PC-9 (cell line): ENCODE measurements at regions of chr2 and their contacts with region 1.

Region 1: GRCh38 chr2:67346718-67347407 is 50.3 kb upstream of the ETAA1 start:
- DNase-seq: peak in 1 of 2 experiments; percentile 45
- H3K4me3 ChIP-seq: no peak overlapping the region
- H3K27ac ChIP-seq: no peak overlapping the region
- H3K4me1 ChIP-seq: no peaks in the 10 kb centered on the region; the same call in 1 of the 2 replicates
- H3K27me3 ChIP-seq: no peaks in the 10 kb centered on the region
- CTCF ChIP-seq: no peak

Region 2: GRCh38 chr2:66982766-66983165 is 364.1 kb before region 1 on chr2:
- CTCF ChIA-PET with region 1: interaction called, 12 read pairs
- POLR2A ChIA-PET with region 1: no interaction called
- intact Hi-C with region 1: no loop called
- DNase-seq: no peak
- H3K4me3 ChIP-seq: no peak overlapping the region
- H3K27ac ChIP-seq: no peak overlapping the region
- H3K4me1 ChIP-seq: no peaks in the 10 kb centered on the region
- H3K27me3 ChIP-seq: no peaks in the 10 kb centered on the region
- CTCF ChIP-seq: no peak

Region 3: DNA sequence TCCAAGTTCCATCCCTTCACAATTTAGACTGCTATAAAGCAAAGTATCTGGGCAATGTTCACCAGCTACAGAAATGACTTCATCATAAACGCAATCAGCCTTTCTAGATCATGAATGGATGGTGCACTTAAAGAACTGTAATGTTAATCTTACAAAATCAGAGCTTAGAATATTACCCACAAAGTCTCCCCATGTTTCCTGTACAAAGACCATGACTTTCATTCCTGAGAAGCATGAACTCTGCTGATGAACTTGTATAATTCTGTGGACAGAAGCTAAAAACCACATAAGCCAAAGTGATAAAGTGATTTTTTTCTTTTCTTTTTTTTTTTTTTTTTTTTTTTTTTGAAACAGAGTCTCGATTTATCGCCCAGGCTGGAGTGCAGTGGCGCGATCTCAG is 662.7 kb after region 1 on chr2:
- CTCF ChIA-PET with region 1: no interaction called
- POLR2A ChIA-PET with region 1: no interaction called
- intact Hi-C with region 1: no loop called
- DNase-seq: no peak
- H3K4me3 ChIP-seq: no peak overlapping the region
- H3K27ac ChIP-seq: no peak overlapping the region
- H3K4me1 ChIP-seq: no peaks in the 10 kb centered on the region
- H3K27me3 ChIP-seq: no peaks in the 10 kb centered on the region; the same call in 1 of the 2 replicates
- CTCF ChIP-seq: no peak